ENCODE measurements at regions of chr11 and their contacts with region 1.

Region 1: GRCh38 chr11:72722050-72722748 is 30.0 kb downstream of the ARAP1 start:
- DNase-seq: peak; percentile 65
- H3K4me3 ChIP-seq: peak overlapping the region; percentile 80
- H3K27ac ChIP-seq: peak overlapping the region; percentile 78
- H3K27me3 ChIP-seq: no peaks in the 10 kb centered on the region
- CTCF ChIP-seq: no peak

Region 2: GRCh38 chr11:72598906-72599305 is 123.3 kb before region 1 on chr11:
- CTCF ChIA-PET with region 1: no interaction called
- POLR2A ChIA-PET with region 1: no interaction called
- DNase-seq: no peak
- H3K4me3 ChIP-seq: no peak overlapping the region
- H3K27ac ChIP-seq: no peak overlapping the region
- H3K27me3 ChIP-seq: peaks cover 53% of the 10 kb centered on the region
- CTCF ChIP-seq: peak; percentile 50

Region 3: GRCh38 chr11:72696866-72697700 is 25.1 kb before region 1 on chr11:
- CTCF ChIA-PET with region 1: no interaction called
- POLR2A ChIA-PET with region 1: no interaction called
- DNase-seq: no peak
- H3K4me3 ChIP-seq: no peak overlapping the region
- H3K27ac ChIP-seq: no peak overlapping the region
- H3K27me3 ChIP-seq: no peaks in the 10 kb centered on the region
- CTCF ChIP-seq: no peak

Region 4: DNA sequence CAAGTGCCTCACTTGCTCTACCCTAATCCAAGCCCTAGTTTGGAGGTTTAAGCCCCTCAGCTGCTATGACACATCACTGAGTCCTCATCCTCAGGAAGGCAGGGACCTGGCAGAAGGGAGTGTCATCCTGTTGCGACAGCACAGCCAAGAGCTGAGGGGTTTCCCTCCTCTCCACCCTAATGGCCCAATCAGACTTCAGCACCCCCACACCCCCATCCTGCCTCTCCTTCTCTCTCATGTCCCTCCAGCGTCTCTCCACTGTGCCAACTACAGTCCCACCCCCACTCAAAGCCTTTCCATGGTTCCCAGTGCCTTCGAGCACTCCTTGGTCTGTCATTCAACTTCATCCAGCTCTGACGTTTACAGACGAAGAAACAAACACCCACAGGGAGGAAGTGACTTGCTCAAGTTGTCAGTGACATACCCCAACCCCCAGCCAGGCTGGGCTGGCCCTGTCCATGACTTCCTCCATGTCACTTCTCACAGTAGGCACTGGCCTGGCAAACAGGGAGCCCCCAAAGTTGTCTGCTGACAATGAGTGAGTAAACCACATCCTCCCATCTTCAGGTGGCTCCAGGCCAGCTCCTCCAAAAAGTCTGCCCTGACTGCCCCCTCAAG is 14.4 kb after region 1 on chr11:
- CTCF ChIA-PET with region 1: interaction called, 16 read pairs
- POLR2A ChIA-PET with region 1: interaction called, 3 read pairs
- DNase-seq: no peak
- H3K4me3 ChIP-seq: no peak overlapping the region
- H3K27ac ChIP-seq: peak overlapping the region; percentile 31
- H3K27me3 ChIP-seq: no peaks in the 10 kb centered on the region
- CTCF ChIP-seq: no peak

Region 5: GRCh38 chr11:72788241-72788640 is 66.0 kb after region 1 on chr11:
- CTCF ChIA-PET with region 1: interaction called, 73 read pairs
- POLR2A ChIA-PET with region 1: interaction called, 4 read pairs
- DNase-seq: no peak
- H3K4me3 ChIP-seq: no peak overlapping the region
- H3K27ac ChIP-seq: no peak overlapping the region
- H3K27me3 ChIP-seq: no peaks in the 10 kb centered on the region
- CTCF ChIP-seq: no peak

Region 6: GRCh38 chr11:72793425-72794367 is 71.5 kb after region 1 on chr11 and contains the start of gene STARD10:
- CTCF ChIA-PET with region 1: interaction called, 73 read pairs
- POLR2A ChIA-PET with region 1: interaction called, 5 read pairs
- DNase-seq: peak; percentile 89
- H3K4me3 ChIP-seq: peak within 1 kb of the TSS; percentile 75
- H3K27ac ChIP-seq: peak within 1 kb of the TSS; percentile 96
- H3K27me3 ChIP-seq: no peaks in the 10 kb centered on the region
- CTCF ChIP-seq: peak; percentile 94
- polyA plus RNA-seq, gene STARD10: 38.4 and 49.0 TPM in 2 replicates

Region 7: GRCh38 chr11:72813740-72814285 is 91.6 kb after region 1 on chr11:
- CTCF ChIA-PET with region 1: interaction called, 38 read pairs
- POLR2A ChIA-PET with region 1: interaction called, 3 read pairs
- DNase-seq: no peak
- H3K4me3 ChIP-seq: peak overlapping the region; percentile 87
- H3K27ac ChIP-seq: peak overlapping the region; percentile 96
- H3K27me3 ChIP-seq: no peaks in the 10 kb centered on the region
- CTCF ChIP-seq: no peak

Region 8: DNA sequence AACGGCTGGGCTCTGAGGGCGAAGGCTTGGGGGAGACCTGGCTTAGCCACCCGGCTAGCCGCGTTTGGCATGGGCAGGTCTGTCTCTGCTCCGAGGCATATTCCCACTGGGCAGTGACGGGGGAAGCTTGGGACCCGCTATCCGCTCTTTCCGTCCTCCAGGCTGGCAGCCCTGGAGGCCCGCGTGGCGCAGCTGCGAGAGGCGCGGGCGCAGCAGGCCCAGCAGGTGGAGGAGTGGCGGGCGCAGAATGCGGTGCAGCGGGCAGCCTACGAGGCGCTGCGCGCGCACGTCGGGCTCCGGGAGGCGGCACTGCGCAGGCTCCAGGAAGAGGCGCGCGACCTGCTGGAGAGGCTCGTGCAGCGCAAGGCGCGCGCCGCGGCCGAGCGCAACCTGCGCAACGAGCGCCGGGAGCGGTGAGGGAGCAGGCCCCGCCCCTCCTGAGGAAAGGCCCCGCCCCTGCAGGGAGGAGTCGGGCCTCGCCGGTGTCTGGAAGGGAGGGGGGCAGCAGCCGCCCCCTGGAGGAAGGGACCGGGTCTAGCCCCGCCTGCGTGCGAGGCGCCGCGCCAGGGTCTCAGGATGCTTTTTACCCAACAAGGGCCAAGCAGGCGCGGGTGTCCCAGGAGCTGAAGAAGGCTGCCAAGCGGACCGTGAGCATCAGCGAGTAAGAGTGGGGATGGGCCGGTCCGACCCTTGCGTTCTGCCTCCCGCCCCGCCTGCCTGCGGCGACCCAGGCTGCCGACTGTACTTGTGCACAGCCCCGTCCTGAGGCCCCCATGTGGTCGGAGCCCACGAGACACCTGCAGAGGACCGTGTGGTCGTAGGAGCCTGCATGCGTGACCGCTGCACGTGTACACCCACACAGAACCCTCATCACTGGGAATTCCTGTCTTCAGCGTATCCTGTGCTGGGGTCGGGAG is 99.9 kb after region 1 on chr11:
- CTCF ChIA-PET with region 1: interaction called, 14 read pairs
- POLR2A ChIA-PET with region 1: no interaction called
- DNase-seq: peak; percentile 58
- H3K4me3 ChIP-seq: peak overlapping the region; percentile 63
- H3K27ac ChIP-seq: no peak overlapping the region
- H3K27me3 ChIP-seq: no peaks in the 10 kb centered on the region
- CTCF ChIP-seq: peak; percentile 4; the same call in 1 of the 2 replicates

Region 9: DNA sequence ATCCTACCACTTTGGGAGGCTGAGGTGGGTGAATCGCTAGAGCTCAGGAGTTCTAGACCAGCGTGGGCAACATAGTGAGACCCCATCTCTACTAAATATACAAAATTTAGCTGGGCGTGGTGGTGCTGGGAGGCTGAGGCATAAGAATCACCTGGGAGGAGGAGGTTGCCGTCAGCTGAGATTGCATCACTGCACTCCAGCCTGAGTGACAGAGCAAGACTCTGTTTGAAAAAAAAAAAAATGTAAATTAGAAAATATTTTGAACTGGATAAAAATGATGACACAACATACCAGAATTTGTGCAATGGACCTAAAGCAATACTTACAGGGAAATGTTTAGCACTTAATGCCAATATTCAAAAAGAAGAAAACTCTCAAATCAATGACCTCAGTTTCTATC is 138.4 kb after region 1 on chr11:
- CTCF ChIA-PET with region 1: interaction called, 10 read pairs
- POLR2A ChIA-PET with region 1: no interaction called
- DNase-seq: no peak
- H3K4me3 ChIP-seq: no peak overlapping the region
- H3K27ac ChIP-seq: no peak overlapping the region
- H3K27me3 ChIP-seq: no peaks in the 10 kb centered on the region
- CTCF ChIP-seq: no peak

Measured in AG04450 (cell line).